Activated naive CD4-positive, alpha-beta T cell treated with anti-CD3 and anti-CD28 coated beads for 36 hours (primary cell): ENCODE measurements at regions of chr2 and their contacts with region 1.

Region 1: GRCh38 chr2:59182249-59182648 is 941.1 kb upstream of the FANCL start:
- DNase-seq: peak; percentile 4
- H3K4me3 Mint-ChIP-seq: no peak overlapping the region
- H3K27ac Mint-ChIP-seq: no peak overlapping the region
- H3K4me1 Mint-ChIP-seq: no peaks in the 10 kb centered on the region
- H3K27me3 Mint-ChIP-seq: peaks cover 6% of the 10 kb centered on the region

Region 2: DNA sequence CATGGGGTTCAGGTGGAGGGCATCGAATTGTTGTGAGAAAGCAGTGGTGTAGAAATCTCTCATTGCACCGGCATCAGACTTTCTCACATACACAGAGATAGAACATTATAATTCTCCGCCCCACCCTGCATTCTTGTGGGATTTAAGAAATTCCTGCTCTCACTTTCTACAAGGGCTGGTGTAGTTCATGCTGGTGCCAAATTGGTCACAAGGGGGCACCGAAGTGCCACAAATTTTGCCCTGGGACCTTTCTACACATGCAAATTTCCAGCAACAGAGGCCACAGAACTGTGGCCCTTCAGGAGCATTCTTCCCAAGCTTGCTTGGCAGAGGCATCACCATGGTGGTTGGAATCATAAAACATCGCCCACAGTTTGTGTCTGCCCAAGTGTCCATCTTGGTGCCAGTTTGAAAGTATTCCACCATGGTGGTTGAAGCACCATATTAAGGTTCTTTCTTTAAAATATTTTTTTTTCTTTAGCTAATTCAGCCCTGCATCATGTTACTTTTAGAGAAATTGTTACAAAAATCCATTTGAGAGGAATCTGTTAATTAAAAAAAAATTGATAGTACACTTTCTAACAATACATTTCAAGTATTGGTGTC is 420.0 kb before region 1 on chr2:
- CTCF ChIA-PET with region 1: no interaction called
- intact Hi-C with region 1: loop called (anchors 5 kb)
- DNase-seq: peak; percentile 43
- H3K4me3 Mint-ChIP-seq: no peak overlapping the region
- H3K27ac Mint-ChIP-seq: no peak overlapping the region
- H3K4me1 Mint-ChIP-seq: no peaks in the 10 kb centered on the region
- H3K27me3 Mint-ChIP-seq: no peaks in the 10 kb centered on the region

Region 3: GRCh38 chr2:59025157-59025757 is 157.0 kb before region 1 on chr2:
- CTCF ChIA-PET with region 1: no interaction called
- intact Hi-C with region 1: loop called (anchors 1 kb)
- DNase-seq: peak; percentile 27
- H3K4me3 Mint-ChIP-seq: no peak overlapping the region
- H3K27ac Mint-ChIP-seq: no peak overlapping the region
- H3K4me1 Mint-ChIP-seq: no peaks in the 10 kb centered on the region
- H3K27me3 Mint-ChIP-seq: peaks cover 2% of the 10 kb centered on the region